ENCODE measurements at regions of chr20 and their contacts with region 1.

Region 1: GRCh38 chr20:35146920-35147574 is at the start of gene EDEM2:
- DNase-seq: peak; percentile 95
- ATAC-seq: peak; percentile 91
- H3K4me3 Mint-ChIP-seq: peak within 1 kb of the TSS; percentile 95
- H3K27ac Mint-ChIP-seq: peak within 1 kb of the TSS; percentile 90
- H3K4me1 Mint-ChIP-seq: peaks cover 27% of the 10 kb centered on the region
- H3K27me3 Mint-ChIP-seq: no peaks in the 10 kb centered on the region
- CTCF ChIP-seq: no peak
- total RNA-seq, gene EDEM2: 14.4 to 16.0 TPM

Region 2: DNA sequence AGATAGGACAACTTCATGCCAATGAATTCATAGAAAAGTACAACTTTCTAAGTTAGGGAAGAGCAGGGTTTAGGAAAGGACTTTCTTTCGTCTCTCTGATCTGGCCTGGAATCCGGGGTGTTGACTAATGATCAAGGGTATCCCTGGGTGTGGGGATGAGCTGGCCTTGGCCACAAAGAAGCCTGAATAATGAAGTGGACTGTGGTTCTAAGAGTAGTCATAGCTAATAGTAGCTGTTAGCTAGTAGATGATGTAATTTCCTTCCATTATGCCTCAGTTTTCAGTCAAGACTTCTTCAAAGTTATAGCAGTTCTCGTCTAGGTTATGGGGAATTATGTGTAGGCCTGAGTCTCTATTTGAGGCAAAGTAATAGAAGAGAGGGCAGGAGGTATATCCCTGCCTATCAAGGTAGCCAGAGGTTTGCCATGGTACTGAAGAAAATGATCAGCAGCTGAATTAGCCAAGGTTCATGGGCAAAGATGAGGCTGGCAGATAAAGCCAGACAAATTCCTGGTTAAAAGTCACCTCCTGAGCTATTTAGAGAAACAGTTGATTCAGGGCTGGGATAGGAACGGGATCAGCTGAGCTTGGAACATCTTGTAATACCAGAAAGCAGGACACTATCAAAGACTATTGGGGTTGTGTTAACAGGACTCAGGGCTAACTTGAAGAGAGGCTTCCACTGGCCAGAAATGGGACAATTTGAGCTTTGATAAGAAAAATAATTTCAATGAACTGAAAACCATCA is 35.7 kb before region 1 on chr20:
- CTCF ChIA-PET with region 1: no interaction called
- POLR2A ChIA-PET with region 1: no interaction called
- intact Hi-C with region 1: no loop called
- DNase-seq: no peak
- ATAC-seq: no peak
- H3K4me3 Mint-ChIP-seq: no peak overlapping the region
- H3K27ac Mint-ChIP-seq: peak overlapping the region; percentile 53
- H3K4me1 Mint-ChIP-seq: peaks cover 6% of the 10 kb centered on the region
- H3K27me3 Mint-ChIP-seq: no peaks in the 10 kb centered on the region
- CTCF ChIP-seq: no peak

Region 3: DNA sequence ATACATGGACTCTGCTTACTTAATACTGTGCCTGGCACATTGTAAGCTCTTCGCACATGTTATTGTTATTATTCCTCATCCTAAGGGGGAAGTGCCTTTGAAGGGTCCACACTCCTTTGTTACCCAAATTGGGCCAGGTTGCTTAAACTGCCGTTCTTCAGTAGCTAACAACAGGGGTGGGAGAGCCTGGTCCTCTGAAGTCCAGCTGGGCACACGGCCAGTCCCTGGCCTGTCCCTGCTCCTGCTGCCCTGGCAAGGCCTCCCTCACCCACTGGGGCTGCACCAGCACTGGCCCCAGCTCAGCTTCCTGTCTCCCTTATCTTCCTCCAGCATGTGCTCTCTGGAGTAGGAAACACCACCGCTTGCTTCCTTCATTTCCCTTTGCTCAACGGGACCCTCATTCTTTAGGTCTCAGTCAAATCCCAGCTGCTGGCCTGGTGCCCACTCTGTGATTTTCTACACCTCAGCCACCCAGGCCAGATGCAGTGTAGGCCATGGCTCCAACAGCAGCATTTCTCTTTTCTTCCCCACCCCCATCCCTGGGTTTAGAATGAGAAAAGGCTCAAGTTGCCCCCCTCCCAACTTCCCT is 19.3 kb after region 1 on chr20:
- CTCF ChIA-PET with region 1: interaction called, 10 read pairs
- POLR2A ChIA-PET with region 1: no interaction called
- intact Hi-C with region 1: no loop called
- DNase-seq: no peak
- ATAC-seq: no peak
- H3K4me3 Mint-ChIP-seq: no peak overlapping the region
- H3K27ac Mint-ChIP-seq: no peak overlapping the region
- H3K4me1 Mint-ChIP-seq: peaks cover 12% of the 10 kb centered on the region
- H3K27me3 Mint-ChIP-seq: no peaks in the 10 kb centered on the region
- CTCF ChIP-seq: no peak

Region 4: DNA sequence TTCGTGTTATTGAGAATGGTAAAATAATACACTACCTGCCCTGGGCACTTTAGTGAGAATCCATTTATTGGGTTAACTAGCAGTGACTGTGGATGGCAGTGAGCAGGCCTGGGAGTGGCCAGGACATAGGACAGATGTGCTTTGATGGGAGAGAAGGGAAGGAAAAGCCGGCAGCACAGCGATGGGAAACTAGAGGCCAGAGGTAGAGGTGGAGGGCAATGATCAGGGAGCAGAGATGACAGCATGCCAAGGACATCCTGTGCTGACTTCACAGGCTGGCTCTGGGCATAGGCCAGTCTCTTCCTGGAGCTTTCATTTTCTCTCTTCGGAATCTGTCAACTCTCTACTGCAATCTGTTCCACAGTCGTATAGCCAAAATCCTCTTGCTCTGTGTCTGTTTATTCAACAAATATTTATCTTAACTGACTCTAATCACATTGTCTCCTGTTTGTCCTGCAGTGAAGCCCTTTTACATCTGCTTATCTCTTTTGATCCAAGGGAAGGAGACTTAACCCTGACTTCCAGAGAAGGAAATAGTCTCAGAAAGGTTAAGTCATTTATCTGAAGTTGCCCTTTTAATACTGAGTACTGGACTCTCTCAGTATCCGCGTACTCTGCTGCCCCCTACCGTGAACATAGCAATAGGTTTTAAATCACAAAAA is 61.0 kb after region 1 on chr20:
- CTCF ChIA-PET with region 1: interaction called, 48 read pairs
- POLR2A ChIA-PET with region 1: no interaction called
- intact Hi-C with region 1: loop called (anchors 1 kb)
- DNase-seq: peak; percentile 89
- ATAC-seq: peak; percentile 91
- H3K4me3 Mint-ChIP-seq: no peak overlapping the region
- H3K27ac Mint-ChIP-seq: no peak overlapping the region
- H3K4me1 Mint-ChIP-seq: no peaks in the 10 kb centered on the region
- H3K27me3 Mint-ChIP-seq: no peaks in the 10 kb centered on the region
- CTCF ChIP-seq: peak; percentile 81

Region 5: DNA sequence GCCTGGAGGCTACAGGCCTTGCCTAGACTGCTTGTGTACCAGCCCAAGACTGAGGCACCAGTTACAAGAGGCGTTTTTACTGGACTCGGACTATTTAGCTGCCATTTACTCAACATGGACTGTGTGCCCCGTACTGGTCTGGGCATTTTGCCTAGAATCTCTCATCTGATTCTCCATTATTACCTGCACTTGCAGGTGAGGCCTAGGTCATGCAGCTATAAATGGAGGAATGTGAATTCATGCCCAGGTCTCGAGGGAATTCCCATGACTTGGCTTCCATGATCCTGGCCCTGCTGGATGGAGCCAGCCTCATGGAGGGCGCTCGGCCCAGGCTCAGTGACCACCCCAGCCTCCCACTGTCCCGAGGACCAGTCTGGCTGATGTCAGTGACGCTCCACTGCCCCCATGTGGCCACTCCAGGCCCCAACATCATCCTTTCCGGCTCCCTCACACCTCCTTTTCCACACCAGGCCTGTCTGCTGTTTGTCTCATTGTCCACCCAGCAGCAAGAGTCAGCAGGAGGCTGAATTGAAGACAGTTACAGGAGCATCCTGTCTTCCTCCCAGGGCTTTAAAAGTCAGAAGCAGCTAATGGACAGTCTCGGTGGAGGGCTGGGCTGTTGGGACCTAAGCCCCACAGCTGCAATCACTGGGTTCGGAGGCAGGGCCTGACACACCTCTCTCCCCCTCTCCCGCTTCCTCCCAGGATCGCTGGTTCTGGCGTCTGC is 122.2 kb after region 1 on chr20:
- CTCF ChIA-PET with region 1: interaction called, 38 read pairs
- POLR2A ChIA-PET with region 1: no interaction called
- intact Hi-C with region 1: no loop called
- DNase-seq: peak; percentile 73
- ATAC-seq: peak; percentile 82
- H3K4me3 Mint-ChIP-seq: no peak overlapping the region
- H3K27ac Mint-ChIP-seq: no peak overlapping the region
- H3K4me1 Mint-ChIP-seq: peaks cover 2% of the 10 kb centered on the region
- H3K27me3 Mint-ChIP-seq: no peaks in the 10 kb centered on the region
- CTCF ChIP-seq: peak; percentile 71